HEK293T (cell line): ENCODE measurements at regions of chr19 and their contacts with region 1.

Region 1: DNA sequence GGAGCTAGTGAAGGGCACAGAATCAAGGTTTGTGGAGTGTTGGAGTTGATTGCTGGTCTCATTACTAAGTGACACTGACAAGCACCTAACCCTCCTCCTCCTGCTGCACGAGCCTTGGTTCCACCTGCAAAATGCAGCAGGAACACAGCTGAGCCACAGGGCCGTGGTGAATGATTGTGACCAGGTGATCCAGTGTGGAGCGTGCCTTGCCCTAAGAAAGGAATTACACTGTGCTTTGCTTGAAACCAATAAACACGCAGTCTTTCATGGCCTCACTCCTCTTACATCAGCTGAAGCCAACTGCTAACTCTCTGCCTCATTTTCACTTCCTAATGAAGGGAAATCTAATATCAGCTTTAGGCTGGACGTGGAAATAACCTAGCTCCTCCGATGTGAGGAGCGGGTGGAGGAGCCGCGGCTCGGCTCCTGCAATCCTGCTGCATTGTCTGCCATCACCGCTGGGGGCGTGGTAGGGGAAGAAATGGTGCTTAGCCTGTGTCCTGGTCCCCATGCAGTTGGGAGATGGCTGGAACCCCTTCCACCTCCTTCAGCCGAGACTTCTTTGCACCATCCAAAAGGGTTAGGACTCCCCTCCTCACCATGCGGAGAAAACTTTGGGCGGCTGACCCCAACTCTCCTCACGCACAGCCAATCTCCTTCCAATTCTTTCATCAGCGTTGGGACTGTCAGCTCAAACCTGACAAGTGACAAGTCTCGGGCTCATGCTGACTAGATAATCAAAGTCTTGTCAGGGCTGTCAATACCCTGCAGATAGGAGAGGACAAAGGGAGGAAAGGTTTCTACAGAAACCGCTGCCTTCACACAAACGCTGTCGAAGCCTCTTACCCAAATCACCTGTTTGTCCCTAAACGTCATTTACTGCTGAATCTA is 427.9 kb downstream of the ZNF536 start:
- DNase-seq: peak; percentile 81

Region 2: GRCh38 chr19:30788105-30788765 is 11.9 kb before region 1 on chr19:
- CTCF ChIA-PET with region 1: interaction called, 11 read pairs
- POLR2A ChIA-PET with region 1: no interaction called
- DNase-seq: no peak